CD4-positive, alpha-beta memory T cell (primary cell): ENCODE measurements at regions of chrX and their contacts with region 1.

Region 1: DNA sequence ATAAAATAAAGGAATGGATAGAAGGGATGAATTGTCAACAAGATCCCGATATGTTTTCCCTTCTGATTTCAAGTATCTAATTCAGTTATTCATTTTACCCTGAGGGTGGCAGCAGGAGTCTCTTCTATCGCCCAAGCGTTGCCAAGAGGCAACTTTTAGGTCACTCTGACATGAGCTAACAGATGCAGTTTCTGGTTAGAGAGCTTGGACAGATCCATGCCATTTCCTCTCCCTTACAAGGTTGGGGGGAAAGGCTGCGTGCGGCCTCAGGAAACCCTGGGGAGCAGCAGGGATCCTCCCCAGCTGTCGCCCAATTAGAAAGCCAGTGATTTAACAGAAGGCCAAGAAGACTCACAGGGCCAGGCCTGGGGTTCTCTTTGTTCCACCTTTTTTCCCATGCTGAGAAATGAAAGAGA is 35.3 kb upstream of the WAS start:
- DNase-seq: peak; percentile 46 to 62 (median 47)
- H3K4me3 ChIP-seq: no peak overlapping the region
- H3K4me3 Mint-ChIP-seq: no peak overlapping the region
- H3K27ac ChIP-seq: no peak overlapping the region
- H3K27ac Mint-ChIP-seq: peak overlapping the region in 4 of 7 donors; percentile 55 to 89 (median 74)
- H3K4me1 ChIP-seq: no peaks in the 10 kb centered on the region
- H3K4me1 Mint-ChIP-seq: peaks cover 0 to 8% (median 4%) of the 10 kb centered on the region in 4 donors
- H3K27me3 ChIP-seq: no peaks in the 10 kb centered on the region
- H3K27me3 Mint-ChIP-seq: no peaks in the 10 kb centered on the region

Region 2: GRCh38 chrX:48663241-48663640 is 14.9 kb after region 1 on chrX:
- CTCF ChIA-PET with region 1: interaction called, 10 read pairs
- POLR2A ChIA-PET with region 1: no interaction called
- intact Hi-C with region 1: no loop called
- DNase-seq: no peak
- H3K4me3 ChIP-seq: no peak overlapping the region
- H3K4me3 Mint-ChIP-seq: no peak overlapping the region
- H3K27ac ChIP-seq: no peak overlapping the region
- H3K27ac Mint-ChIP-seq: no peak overlapping the region
- H3K4me1 ChIP-seq: no peaks in the 10 kb centered on the region
- H3K4me1 Mint-ChIP-seq: peaks cover 6 to 15% (median 10%) of the 10 kb centered on the region in 4 donors
- H3K27me3 ChIP-seq: no peaks in the 10 kb centered on the region
- H3K27me3 Mint-ChIP-seq: no peaks in the 10 kb centered on the region

Region 3: GRCh38 chrX:48911412-48912182 is 263.3 kb after region 1 on chrX and contains the start of gene SLC35A2:
- CTCF ChIA-PET with region 1: interaction called, 18 read pairs
- POLR2A ChIA-PET with region 1: interaction called, 7 read pairs
- intact Hi-C with region 1: loop called (anchors 1 kb)
- DNase-seq: peak; percentile 89 to 92 (median 90)
- H3K4me3 ChIP-seq: peak within 1 kb of the TSS; percentile 47 to 74
- H3K4me3 Mint-ChIP-seq: peak within 1 kb of the TSS; percentile 85 to 96 (median 92)
- H3K27ac ChIP-seq: peak within 1 kb of the TSS; percentile 76
- H3K27ac Mint-ChIP-seq: peak within 1 kb of the TSS; percentile 93 to 100 (median 98)
- H3K4me1 ChIP-seq: peaks cover 58% of the 10 kb centered on the region
- H3K4me1 Mint-ChIP-seq: peaks cover 26 to 62% (median 43%) of the 10 kb centered on the region in 4 donors
- H3K27me3 ChIP-seq: no peaks in the 10 kb centered on the region
- H3K27me3 Mint-ChIP-seq: no peaks in the 10 kb centered on the region
- total RNA-seq, gene SLC35A2: 13.8 to 15.8 TPM

Region 4: DNA sequence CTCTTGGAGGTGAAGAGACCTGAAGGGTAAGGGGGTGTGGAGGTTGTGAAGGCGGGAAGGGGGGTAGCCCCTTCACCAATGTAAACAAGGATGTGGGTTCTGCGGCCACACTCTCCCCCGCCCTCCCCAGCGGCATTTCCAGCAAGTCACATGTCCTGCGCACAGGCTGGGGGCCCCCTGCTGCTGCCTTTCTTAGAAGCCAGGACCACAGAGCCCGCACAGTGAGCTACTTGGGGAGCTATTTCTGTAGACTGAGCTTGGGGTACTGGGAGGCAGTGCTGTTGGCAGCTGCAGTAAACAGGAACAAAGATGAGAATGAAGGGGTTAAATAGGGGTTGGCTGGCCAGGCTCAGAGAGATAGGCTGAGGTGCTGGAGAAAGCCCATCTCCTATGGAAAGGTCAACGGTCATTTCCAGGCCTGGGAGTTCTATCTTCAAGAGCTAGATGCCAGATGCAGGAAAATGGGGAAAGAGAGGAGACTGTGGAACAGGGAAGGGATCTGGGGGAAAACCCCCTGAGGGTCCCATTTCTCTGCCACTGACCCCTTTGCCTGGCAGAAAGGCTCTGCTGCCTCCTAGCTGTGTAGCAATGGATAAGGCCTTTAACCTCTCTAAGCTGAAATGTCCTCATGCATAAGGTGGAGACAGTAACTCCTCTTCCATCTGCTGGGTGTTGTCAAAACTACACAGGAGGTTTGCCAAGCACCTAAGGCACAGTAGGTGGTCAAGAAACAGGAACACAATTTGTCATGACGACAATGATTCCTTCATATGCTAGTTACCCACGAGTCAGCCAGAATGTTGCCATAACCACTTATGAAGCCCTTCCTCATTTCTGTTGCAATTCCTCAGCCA is 288.9 kb after region 1 on chrX:
- CTCF ChIA-PET with region 1: interaction called, 23 read pairs
- POLR2A ChIA-PET with region 1: interaction called, 4 read pairs
- intact Hi-C with region 1: loop called (anchors 1 kb)
- DNase-seq: peak; percentile 92 to 95 (median 92)
- H3K4me3 ChIP-seq: peak overlapping the region; percentile 29 to 58
- H3K4me3 Mint-ChIP-seq: peak overlapping the region; percentile 73 to 87 (median 83)
- H3K27ac ChIP-seq: peak overlapping the region; percentile 94
- H3K27ac Mint-ChIP-seq: peak overlapping the region; percentile 92 to 99 (median 96)
- H3K4me1 ChIP-seq: peaks cover 93% of the 10 kb centered on the region
- H3K4me1 Mint-ChIP-seq: peaks cover 63 to 91% (median 80%) of the 10 kb centered on the region in 4 donors
- H3K27me3 ChIP-seq: no peaks in the 10 kb centered on the region
- H3K27me3 Mint-ChIP-seq: no peaks in the 10 kb centered on the region